K562 (cell line): ENCODE measurements at regions of chr4 and their contacts with region 1.

Region 1: GRCh38 chr4:70704331-70705145 is 16.2 kb downstream of the UTP3 start:
- DNase-seq: peak; percentile 84 to 92 (median 87)
- ATAC-seq: peak; percentile 88
- H3K4me3 ChIP-seq: peak overlapping the region; percentile 79
- H3K27ac ChIP-seq: peak overlapping the region; percentile 85
- H3K4me1 ChIP-seq: peaks cover 15% of the 10 kb centered on the region in 2 experiments; a peak in 4 of 5 replicates
- H3K27me3 ChIP-seq: no peaks in the 10 kb centered on the region
- CTCF ChIP-seq: peak; percentile 41 to 62 (median 49); a peak in 4 of 6 replicates
- EP300 ChIP-seq: no peak
- POLR2A ChIP-seq: peak; percentile 75
- RAD21 ChIP-seq: peak in 1 of 2 experiments; percentile 30; a peak in 1 of 4 replicates

Region 2: GRCh38 chr4:70687821-70688794 is 16.4 kb before region 1 on chr4 and contains the start of gene UTP3:
- CTCF ChIA-PET with region 1: no interaction called
- POLR2A ChIA-PET with region 1: interaction called, 16 read pairs
- in situ Hi-C with region 1: no loop called
- intact Hi-C with region 1: loop called (anchors 1 kb)
- DNase-seq: peak; percentile 81 to 97 (median 87)
- ATAC-seq: peak; percentile 96
- H3K4me3 ChIP-seq: peak within 1 kb of the TSS; percentile 76
- H3K27ac ChIP-seq: peak within 1 kb of the TSS; percentile 82
- H3K4me1 ChIP-seq: peaks cover 7 to 12% of the 10 kb centered on the region in 2 experiments
- H3K27me3 ChIP-seq: no peaks in the 10 kb centered on the region
- CTCF ChIP-seq: peak; percentile 94 to 99 (median 97)
- EP300 ChIP-seq: peak; percentile 65
- POLR2A ChIP-seq: peak; percentile 95
- RAD21 ChIP-seq: peak; percentile 68 to 72
- polyA plus RNA-seq, gene UTP3: 11.9 to 12.4 TPM

Region 3: GRCh38 chr4:70818173-70818855 is 113.8 kb after region 1 on chr4:
- CTCF ChIA-PET with region 1: no interaction called
- POLR2A ChIA-PET with region 1: interaction called, 4 read pairs
- in situ Hi-C with region 1: no loop called
- intact Hi-C with region 1: loop called (anchors 5 kb)
- DNase-seq: no peak
- ATAC-seq: peak; percentile 21
- H3K4me3 ChIP-seq: no peak overlapping the region
- H3K27ac ChIP-seq: no peak overlapping the region
- H3K4me1 ChIP-seq: no peaks in the 10 kb centered on the region
- H3K27me3 ChIP-seq: no peaks in the 10 kb centered on the region
- CTCF ChIP-seq: no peak
- EP300 ChIP-seq: no peak
- POLR2A ChIP-seq: peak; percentile 41; the same call in 1 of the 2 replicates
- RAD21 ChIP-seq: no peak

Region 4: GRCh38 chr4:70901984-70902576 is 197.5 kb after region 1 on chr4 and contains the start of gene MOB1B:
- CTCF ChIA-PET with region 1: no interaction called
- POLR2A ChIA-PET with region 1: interaction called, 3 read pairs
- in situ Hi-C with region 1: no loop called
- intact Hi-C with region 1: loop called (anchors 5 kb)
- DNase-seq: peak; percentile 88 to 94 (median 92)
- ATAC-seq: peak; percentile 90
- H3K4me3 ChIP-seq: peak within 1 kb of the TSS; percentile 82
- H3K27ac ChIP-seq: peak within 1 kb of the TSS; percentile 94
- H3K4me1 ChIP-seq: peaks cover 25 to 26% of the 10 kb centered on the region in 2 experiments; a peak in 4 of 5 replicates
- H3K27me3 ChIP-seq: no peaks in the 10 kb centered on the region
- CTCF ChIP-seq: peak; percentile 41 to 54 (median 50); a peak in 4 of 6 replicates
- EP300 ChIP-seq: no peak; the same call in 1 of the 2 replicates
- POLR2A ChIP-seq: peak; percentile 87
- RAD21 ChIP-seq: peak in 1 of 2 experiments; percentile 22; a peak in 2 of 4 replicates
- polyA plus RNA-seq, gene MOB1B: 8.4 to 9.3 TPM